Motor neuron (in vitro differentiated cells): ENCODE measurements at regions of chr3 and their contacts with region 1.

Region 1: DNA sequence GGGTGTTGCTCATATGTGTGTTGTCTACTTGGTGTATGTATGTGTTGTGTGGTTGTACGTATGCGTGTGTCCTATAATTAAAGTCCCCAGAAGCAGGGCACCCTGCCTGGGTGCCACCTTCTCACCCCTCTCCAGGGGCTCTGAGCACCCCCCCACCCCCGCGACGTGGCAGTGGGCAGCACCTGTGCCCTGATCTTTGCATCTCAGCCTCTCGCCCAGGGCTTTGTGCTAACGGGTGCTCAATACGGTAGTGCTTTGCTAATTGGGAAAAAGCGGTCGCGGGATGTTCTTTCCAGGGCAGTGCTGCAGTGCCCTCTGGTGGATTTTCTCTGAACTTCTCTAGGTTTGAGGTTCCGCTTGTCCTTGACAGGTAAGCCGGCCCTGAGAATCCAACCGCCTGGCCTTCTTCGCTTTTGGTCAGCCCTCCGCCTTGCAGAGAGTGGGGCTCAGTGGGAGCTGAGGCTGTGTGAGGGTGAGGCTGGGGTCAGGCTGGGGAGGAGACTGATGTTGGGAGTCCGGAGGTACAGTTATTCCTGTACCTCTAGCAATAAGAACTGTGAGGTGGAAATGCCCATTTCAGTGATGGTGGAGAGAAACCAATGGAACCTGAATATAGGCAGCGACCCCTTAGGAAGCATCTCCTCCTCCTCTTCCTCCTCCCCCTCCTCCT is 17.6 kb upstream of the EPHB3 start:
- ATAC-seq: peak; percentile 78 to 94 (median 90)
- H3K4me3 ChIP-seq: peak overlapping the region in 2 of 5 donors; percentile 6 to 9
- H3K27ac ChIP-seq: no peak overlapping the region
- H3K4me1 ChIP-seq: peaks cover 3 to 4% of the 10 kb centered on the region in 2 donors

Region 2: GRCh38 chr3:183884427-183885296 is 659.3 kb before region 1 on chr3 and contains the start of gene PARL:
- in situ Hi-C with region 1: loop called in 1 of 9 experiments (anchors 25 kb)
- ATAC-seq: peak; percentile 98 to 100 (median 99)
- H3K4me3 ChIP-seq: peak within 1 kb of the TSS; percentile 60 to 91 (median 66)
- H3K27ac ChIP-seq: peak within 1 kb of the TSS; percentile 75 to 87
- H3K4me1 ChIP-seq: peaks cover 13 to 15% of the 10 kb centered on the region in 2 donors
- total RNA-seq, gene PARL: 33.7 to 68.8 (median 47.3) TPM

Region 3: GRCh38 chr3:184362668-184363540 is 181.1 kb before region 1 on chr3:
- in situ Hi-C with region 1: loop called in 2 of 9 experiments (anchors 25 kb)
- ATAC-seq: peak; percentile 62 to 81 (median 78)
- H3K4me3 ChIP-seq: peak overlapping the region; percentile 56 to 78 (median 67)
- H3K27ac ChIP-seq: peak overlapping the region; percentile 99 to 100
- H3K4me1 ChIP-seq: peaks cover 23 to 30% of the 10 kb centered on the region in 2 donors

Region 4: GRCh38 chr3:184371570-184372018 is 172.4 kb before region 1 on chr3:
- in situ Hi-C with region 1: loop called in 6 of 9 experiments (anchors 10 to 25 kb)
- ATAC-seq: peak; percentile 39 to 98 (median 95)
- H3K4me3 ChIP-seq: no peak overlapping the region
- H3K27ac ChIP-seq: no peak overlapping the region
- H3K4me1 ChIP-seq: peaks cover 7% of the 10 kb centered on the region in 2 donors

Region 5: DNA sequence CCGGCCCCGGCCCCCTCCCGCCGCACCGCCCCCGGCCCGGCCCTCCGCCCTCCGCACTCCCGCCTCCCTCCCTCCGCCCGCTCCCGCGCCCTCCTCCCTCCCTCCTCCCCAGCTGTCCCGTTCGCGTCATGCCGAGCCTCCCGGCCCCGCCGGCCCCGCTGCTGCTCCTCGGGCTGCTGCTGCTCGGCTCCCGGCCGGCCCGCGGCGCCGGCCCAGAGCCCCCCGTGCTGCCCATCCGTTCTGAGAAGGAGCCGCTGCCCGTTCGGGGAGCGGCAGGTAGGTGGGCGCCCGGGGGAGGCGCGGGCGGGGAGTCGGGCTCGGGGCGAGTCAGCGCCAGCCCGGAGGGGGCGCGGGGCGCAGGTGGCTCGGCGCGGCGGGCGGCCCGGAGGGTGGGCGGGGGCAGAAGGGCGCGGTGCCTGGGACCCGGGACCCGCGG is 163.8 kb before region 1 on chr3:
- in situ Hi-C with region 1: loop called in 4 of 9 experiments (anchors 10 to 25 kb)
- ATAC-seq: peak; percentile 15 to 77 (median 60)
- H3K4me3 ChIP-seq: peak overlapping the region; percentile 49 to 89 (median 54)
- H3K27ac ChIP-seq: peak overlapping the region in 1 of 2 donors; percentile 82
- H3K4me1 ChIP-seq: peaks cover 18 to 31% of the 10 kb centered on the region in 2 donors

Region 6: GRCh38 chr3:184417619-184418327 is 126.2 kb before region 1 on chr3:
- in situ Hi-C with region 1: loop called in 1 of 9 experiments (anchors 25 kb)
- ATAC-seq: peak in 7 of 8 experiments; percentile 29 to 100 (median 66)
- H3K4me3 ChIP-seq: no peak overlapping the region
- H3K27ac ChIP-seq: no peak overlapping the region
- H3K4me1 ChIP-seq: peaks cover 12% of the 10 kb centered on the region in 2 donors